Right ventricle myocardium inferior (tissue), 1 donor: ENCODE measurements at regions of chr12 and their contacts with region 1.

Region 1: GRCh38 chr12:83823431-83823963 is 1089.1 kb downstream of the SLC6A15 start:
- DNase-seq: peak; percentile 53
- ATAC-seq: peak; percentile 63

Region 2: GRCh38 chr12:83003044-83003443 is 820.5 kb before region 1 on chr12:
- intact Hi-C with region 1: loop called (anchors 5 kb)
- DNase-seq: no peak
- ATAC-seq: no peak

Region 3: DNA sequence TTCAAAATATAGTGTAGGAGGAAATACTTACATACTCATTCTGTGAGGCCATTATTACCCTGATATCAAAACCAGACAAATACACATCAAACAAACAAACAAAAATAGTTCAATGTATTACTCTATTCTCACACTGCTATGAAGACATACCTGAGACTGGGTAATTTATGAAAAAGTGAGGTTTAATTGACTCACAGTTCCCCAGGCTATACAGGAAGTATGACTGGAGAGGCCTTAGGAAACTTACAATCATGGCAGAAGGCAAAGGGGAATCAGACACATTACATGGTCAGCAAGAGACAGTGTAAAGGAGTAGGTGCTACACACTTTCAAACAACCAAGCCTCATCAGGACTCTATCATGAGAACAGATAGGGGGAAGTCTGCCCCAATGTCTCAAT is 113.6 kb before region 1 on chr12:
- intact Hi-C with region 1: no loop called
- DNase-seq: no peak
- ATAC-seq: no peak

Region 4: DNA sequence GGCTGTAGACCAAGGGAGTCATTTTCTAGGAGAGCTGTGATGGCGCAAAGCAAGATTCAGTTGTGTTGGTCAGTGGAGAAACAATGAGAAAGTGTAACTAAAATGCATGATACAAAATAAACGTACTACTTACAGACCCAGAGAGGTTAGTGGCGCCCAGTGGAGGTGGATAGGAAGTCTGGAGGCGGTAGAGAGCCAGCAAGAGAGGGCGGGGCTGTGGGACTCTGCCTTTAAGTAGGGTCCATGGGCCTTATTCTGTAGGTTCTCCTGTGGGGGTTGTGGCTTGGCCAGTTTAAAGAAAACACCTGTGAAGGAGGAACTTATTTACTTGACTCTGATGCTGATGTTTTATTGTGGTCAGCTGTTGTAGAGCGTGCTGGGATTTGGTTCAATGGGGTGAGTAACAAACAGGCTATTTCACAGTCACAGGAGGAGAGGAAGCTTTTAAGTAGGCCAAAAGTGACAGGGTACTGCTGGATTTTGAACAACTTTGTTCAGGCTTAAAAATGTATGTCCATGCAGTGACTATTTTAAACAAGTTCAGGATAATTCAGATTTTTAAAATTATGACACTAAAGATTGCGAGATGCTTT is 39.1 kb before region 1 on chr12:
- intact Hi-C with region 1: no loop called
- DNase-seq: peak; percentile 16
- ATAC-seq: no peak

Region 5: GRCh38 chr12:84016956-84017355 is 193.5 kb after region 1 on chr12:
- intact Hi-C with region 1: no loop called
- DNase-seq: no peak
- ATAC-seq: no peak